ENCODE measurements at regions of chr10 and their contacts with region 1.

Region 1: DNA sequence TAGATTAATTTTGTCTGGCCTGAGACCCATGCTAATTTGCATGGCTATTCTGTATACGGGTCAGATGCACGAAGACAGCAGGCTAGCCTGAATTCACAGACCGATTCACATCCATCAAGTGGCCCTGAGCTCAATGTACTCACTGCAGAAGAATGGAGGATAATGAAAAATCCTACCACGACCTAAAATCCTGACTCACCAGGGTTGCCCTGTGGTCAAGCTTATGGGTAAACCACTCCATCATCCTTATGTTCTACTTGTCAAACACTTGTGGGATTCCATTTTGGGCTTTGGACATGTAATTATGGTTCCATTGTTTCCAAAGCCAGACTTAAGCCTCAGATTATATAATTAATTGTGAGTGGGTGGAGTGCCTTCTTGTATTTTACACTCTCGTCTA is 110.4 kb upstream of the ZNF438 start:
- DNase-seq: peak; percentile 90
- ATAC-seq: peak; percentile 59
- H3K4me3 ChIP-seq: no peak overlapping the region
- H3K27ac ChIP-seq: no peak overlapping the region
- H3K4me1 ChIP-seq: peaks cover 36% of the 10 kb centered on the region
- H3K27me3 ChIP-seq: no peaks in the 10 kb centered on the region
- CTCF ChIP-seq: no peak
- POLR2A ChIP-seq: no peak
- RAD21 ChIP-seq: no peak

Region 2: GRCh38 chr10:30705101-30705624 is 436.9 kb before region 1 on chr10:
- CTCF ChIA-PET with region 1: no interaction called
- POLR2A ChIA-PET with region 1: no interaction called
- dilution Hi-C with region 1: no loop called
- in situ Hi-C with region 1: no loop called
- intact Hi-C with region 1: no loop called
- DNase-seq: no peak
- ATAC-seq: no peak
- H3K4me3 ChIP-seq: no peak overlapping the region
- H3K27ac ChIP-seq: no peak overlapping the region
- H3K4me1 ChIP-seq: peaks cover 3% of the 10 kb centered on the region
- H3K27me3 ChIP-seq: no peaks in the 10 kb centered on the region; the same call in 1 of the 2 replicates
- CTCF ChIP-seq: no peak
- POLR2A ChIP-seq: no peak
- RAD21 ChIP-seq: no peak

Region 3: DNA sequence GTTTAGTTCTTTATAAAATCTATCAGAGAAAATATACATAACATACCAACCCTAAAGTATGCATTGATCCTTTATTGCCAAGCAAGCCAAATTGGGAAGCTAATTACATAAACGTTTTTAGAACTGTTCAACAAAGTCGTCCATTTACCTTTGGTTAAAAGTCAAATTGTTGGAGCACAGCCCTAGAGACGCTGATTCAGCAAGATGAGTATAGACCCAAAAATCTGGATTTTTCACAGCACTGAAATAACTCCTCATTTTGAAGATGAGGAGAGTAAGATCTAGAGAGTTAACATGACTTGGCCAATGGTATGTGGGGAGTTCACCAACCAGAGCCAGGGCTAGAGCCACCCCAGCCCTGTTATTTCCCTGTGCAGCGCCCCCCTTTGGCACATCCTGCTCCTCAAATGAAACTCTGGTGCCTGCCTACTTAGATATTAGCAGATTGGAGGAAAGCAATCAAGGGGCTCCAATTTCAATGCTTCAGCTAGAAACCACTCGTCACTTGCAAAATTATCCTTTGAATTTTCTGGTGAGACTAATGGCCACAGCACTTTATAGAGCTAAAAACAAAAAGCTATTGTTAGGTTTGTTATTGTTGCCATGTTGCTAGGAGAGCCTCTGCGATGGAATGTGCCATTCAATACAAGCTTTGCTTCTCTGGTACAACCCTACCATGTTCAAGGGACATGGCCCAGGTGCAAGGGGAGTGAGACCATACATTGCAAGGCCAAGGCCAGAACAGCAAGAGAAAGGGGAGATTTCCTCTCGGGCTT is 44.4 kb after region 1 on chr10:
- CTCF ChIA-PET with region 1: no interaction called
- POLR2A ChIA-PET with region 1: no interaction called
- dilution Hi-C with region 1: no loop called
- in situ Hi-C with region 1: no loop called
- intact Hi-C with region 1: no loop called
- DNase-seq: no peak
- ATAC-seq: no peak
- H3K4me3 ChIP-seq: no peak overlapping the region
- H3K27ac ChIP-seq: no peak overlapping the region
- H3K4me1 ChIP-seq: peaks cover 8% of the 10 kb centered on the region
- H3K27me3 ChIP-seq: no peaks in the 10 kb centered on the region
- CTCF ChIP-seq: no peak
- POLR2A ChIP-seq: no peak
- RAD21 ChIP-seq: no peak

Region 4: DNA sequence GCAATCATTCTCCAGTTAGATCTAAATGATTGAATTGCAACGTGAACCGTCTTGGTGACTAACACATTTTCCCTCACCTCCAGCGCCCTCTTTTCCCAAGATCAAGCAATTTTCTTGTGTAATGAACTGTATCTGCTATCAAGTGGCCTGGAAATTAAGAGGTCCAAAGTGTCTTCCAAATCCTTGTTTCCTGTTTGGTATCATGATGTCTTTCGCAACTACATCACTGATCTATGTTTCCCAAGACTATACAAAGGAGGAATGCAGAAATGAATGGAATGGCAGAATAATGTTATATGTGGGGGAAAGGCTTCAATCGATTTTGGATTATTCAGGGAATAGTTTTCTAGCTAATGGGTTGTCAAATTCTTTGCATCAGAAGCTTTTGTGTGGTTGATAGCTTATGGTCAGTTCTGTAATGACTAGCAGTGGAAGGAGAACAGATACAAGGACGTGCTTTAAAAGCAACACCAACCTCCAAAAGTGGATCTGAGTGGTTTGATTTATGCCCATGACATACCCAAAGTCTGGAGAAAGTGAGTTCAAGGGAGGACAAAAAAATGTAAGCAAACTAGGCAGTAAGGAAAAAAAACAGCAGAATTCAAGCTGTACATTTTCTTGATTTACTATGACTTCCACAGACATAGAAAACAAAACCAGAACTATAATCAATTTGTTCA is 162.4 kb after region 1 on chr10:
- CTCF ChIA-PET with region 1: no interaction called
- POLR2A ChIA-PET with region 1: no interaction called
- dilution Hi-C with region 1: no loop called
- in situ Hi-C with region 1: no loop called
- intact Hi-C with region 1: loop called (anchors 5 kb)
- DNase-seq: peak; percentile 56
- ATAC-seq: peak; percentile 61
- H3K4me3 ChIP-seq: no peak overlapping the region
- H3K27ac ChIP-seq: peak overlapping the region; percentile 58
- H3K4me1 ChIP-seq: peaks cover 6% of the 10 kb centered on the region; the same call in 1 of the 2 replicates
- H3K27me3 ChIP-seq: no peaks in the 10 kb centered on the region
- CTCF ChIP-seq: no peak
- POLR2A ChIP-seq: no peak
- RAD21 ChIP-seq: no peak

Measured in IMR-90 (cell line).